Right cardiac atrium (tissue), 5 donors: ENCODE measurements at regions of chr13 and their contacts with region 1.

Region 1: DNA sequence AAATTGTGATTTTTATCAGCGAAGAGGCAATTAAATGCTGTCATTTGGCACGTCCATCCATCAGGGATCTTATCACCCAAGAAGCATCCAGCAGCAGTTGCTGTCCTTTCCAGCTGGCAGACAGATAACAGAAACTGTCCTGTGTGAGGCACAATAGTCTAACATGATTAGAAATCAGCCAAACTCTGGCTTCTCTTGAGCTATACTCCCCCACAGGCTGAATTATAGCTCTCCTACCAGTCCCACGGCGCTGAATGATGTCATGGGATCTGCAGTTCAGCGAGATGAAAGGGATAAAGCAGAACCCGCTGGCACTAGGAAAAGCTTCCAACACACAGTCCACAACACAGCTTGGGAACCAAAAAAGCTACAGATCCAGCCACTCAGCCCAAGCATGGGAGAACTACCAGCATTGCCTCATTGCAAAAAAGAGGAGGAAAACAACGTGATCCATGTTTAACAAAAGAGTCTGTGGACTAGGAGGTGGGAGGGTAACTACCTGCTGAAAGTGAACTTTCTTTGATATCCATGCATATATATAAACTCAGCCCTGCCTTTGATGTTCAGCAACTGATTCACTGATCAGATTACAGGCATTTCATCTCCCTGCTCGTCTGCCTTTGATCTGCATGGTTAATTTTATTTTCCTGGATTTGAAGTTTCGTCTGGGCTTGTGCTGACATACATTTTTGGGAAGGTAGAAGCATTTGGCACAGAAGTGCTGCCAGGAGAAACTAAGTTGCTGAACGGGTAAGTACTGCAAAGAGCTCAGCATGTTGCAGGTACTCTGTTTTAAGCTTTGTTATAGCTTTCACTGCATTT is at the start of gene TNFRSF19:
- DNase-seq: peak; percentile 77 to 82 (median 78)
- ATAC-seq: peak; percentile 92 to 97
- H3K4me3 ChIP-seq: peak within 1 kb of the TSS; percentile 64
- H3K27ac ChIP-seq: peak within 1 kb of the TSS; percentile 60
- H3K4me1 ChIP-seq: no peaks in the 10 kb centered on the region
- H3K27me3 ChIP-seq: no peaks in the 10 kb centered on the region
- total RNA-seq, gene TNFRSF19: 26.2 to 50.8 (median 38.6) TPM

Region 2: GRCh38 chr13:23466144-23467002 is 103.9 kb before region 1 on chr13:
- intact Hi-C with region 1: loop called in 3 of 4 experiments (anchors 5 to 10 kb)
- DNase-seq: peak; percentile 73 to 88 (median 85)
- ATAC-seq: peak; percentile 94 to 95
- H3K4me3 ChIP-seq: peak overlapping the region; percentile 12
- H3K27ac ChIP-seq: peak overlapping the region; percentile 33
- H3K4me1 ChIP-seq: peaks cover 2% of the 10 kb centered on the region
- H3K27me3 ChIP-seq: no peaks in the 10 kb centered on the region

Region 3: DNA sequence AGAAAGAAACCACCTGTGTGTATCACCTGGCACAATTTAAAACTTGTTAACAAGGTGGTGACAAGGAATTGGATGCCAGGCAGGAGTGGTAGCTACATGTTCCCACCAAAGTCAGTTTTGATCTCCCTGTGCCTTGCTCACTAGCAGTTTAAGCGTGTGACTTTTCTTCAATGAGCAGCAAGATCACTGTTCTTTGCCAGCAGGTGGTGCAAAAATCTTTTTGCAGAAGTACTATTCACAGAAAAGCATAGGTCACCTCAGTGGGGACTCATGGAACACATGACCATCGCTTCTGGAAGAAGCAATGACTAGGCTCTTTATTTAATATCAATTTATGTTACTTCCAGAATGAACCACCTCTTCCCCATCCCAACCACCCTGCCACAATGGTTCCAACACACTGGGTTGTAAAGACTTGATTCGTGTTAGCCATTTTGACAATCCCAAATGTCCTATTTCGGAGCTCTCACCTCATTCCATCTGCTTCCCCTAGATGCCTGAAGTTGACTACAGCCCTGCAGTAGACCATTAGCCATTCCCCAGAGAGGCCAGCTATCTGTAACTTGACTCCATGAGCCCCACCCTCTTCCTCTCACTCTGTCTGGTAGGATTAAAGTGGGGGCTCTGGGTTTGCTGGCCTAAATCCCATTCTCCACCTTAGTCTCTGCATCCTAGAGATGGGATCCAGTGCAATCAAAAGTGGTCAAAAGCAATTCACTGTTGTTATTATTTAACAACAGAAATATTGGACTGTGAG is 59.2 kb before region 1 on chr13:
- intact Hi-C with region 1: loop called in 1 of 4 experiments (anchors 5 kb)
- DNase-seq: no peak
- ATAC-seq: peak in 1 of 2 donors; percentile 40
- H3K4me3 ChIP-seq: no peak overlapping the region
- H3K27ac ChIP-seq: no peak overlapping the region
- H3K4me1 ChIP-seq: peaks cover 2% of the 10 kb centered on the region
- H3K27me3 ChIP-seq: no peaks in the 10 kb centered on the region